CD8-positive, alpha-beta memory T cell (primary cell): ENCODE measurements at regions of chr1 and their contacts with region 1.

Region 1: GRCh38 chr1:201792534-201793305 is 36.2 kb upstream of the IPO9 start:
- DNase-seq: peak; percentile 6 to 62 (median 28)
- H3K4me3 ChIP-seq: no peak overlapping the region
- H3K4me3 Mint-ChIP-seq: no peak overlapping the region
- H3K27ac ChIP-seq: no peak overlapping the region
- H3K27ac Mint-ChIP-seq: peak overlapping the region in 1 of 8 donors; percentile 2
- H3K4me1 ChIP-seq: no peaks in the 10 kb centered on the region
- H3K4me1 Mint-ChIP-seq: no peaks in the 10 kb centered on the region
- H3K27me3 ChIP-seq: no peaks in the 10 kb centered on the region
- H3K27me3 Mint-ChIP-seq: peaks cover 0 to 4% of the 10 kb centered on the region in 2 donors

Region 2: DNA sequence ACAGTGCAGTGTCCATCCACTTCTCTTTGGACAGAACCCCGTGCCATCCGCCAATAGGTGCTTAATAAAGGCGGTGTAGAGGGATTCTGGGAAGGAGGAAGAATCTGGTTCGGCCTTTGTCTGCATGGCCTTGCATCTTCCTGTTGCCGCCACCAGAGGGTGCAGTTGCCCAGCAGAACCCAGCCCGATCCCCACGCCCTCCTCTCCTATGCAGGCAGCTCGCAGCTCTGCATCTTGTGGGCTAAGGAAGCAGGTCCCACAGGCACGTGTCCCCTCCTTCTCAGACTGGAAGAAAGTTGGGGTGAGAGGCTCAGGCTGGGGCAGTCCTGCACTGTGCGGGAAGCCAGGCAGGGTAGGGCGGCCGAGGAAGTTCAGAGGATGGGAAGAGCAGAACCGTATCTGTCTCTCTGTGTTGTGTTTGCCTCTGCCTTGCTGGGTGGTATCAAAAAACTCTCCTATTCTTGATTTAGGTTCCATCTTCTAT is 233.0 kb before region 1 on chr1:
- CTCF ChIA-PET with region 1: interaction called, 29 read pairs
- POLR2A ChIA-PET with region 1: no interaction called
- DNase-seq: peak; percentile 27 to 70 (median 40)
- H3K4me3 ChIP-seq: no peak overlapping the region
- H3K4me3 Mint-ChIP-seq: no peak overlapping the region
- H3K27ac ChIP-seq: no peak overlapping the region
- H3K27ac Mint-ChIP-seq: peak overlapping the region in 1 of 8 donors; percentile 47
- H3K4me1 ChIP-seq: no peaks in the 10 kb centered on the region
- H3K4me1 Mint-ChIP-seq: peaks cover 2 to 10% (median 6%) of the 10 kb centered on the region in 3 donors
- H3K27me3 ChIP-seq: no peaks in the 10 kb centered on the region
- H3K27me3 Mint-ChIP-seq: peaks cover 3 to 4% of the 10 kb centered on the region in 2 donors

Region 3: DNA sequence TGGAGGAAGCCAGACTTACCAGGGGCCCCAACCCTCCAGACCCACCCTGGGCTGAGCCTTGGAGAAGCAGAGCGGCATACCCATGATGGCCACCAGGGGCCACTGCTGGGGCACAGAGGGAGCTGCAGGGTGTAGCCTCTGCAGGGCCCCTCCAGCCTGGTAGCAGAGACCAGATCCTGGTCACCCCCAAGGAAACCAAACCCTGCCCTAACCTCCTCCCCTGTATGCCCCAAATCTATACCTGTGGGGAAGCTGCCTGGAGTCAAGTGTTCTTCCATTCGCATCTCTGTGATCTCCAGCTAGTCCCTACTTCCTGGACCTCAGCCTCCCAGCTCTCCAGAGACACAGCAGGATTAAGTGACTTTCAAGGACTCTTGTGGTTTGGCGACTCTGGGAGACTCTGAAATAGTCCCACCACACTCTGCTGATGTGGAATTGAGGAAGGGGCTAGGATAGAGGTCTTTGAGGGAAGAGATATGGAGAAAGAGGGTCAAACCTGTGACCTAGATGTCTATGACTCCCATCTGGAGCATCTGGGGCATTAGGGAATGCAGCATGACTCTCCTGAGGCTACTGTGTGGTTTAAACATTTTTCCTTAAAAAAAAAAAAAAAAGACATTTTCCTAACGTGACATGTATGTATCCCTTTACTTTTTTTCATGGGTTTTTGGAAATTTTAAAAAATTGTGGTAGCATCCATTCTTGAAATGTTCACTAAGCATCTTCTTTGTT is 83.0 kb before region 1 on chr1:
- CTCF ChIA-PET with region 1: interaction called, 90 read pairs
- POLR2A ChIA-PET with region 1: no interaction called
- DNase-seq: peak; percentile 12 to 66 (median 16)
- H3K4me3 ChIP-seq: no peak overlapping the region
- H3K4me3 Mint-ChIP-seq: no peak overlapping the region
- H3K27ac ChIP-seq: no peak overlapping the region
- H3K27ac Mint-ChIP-seq: no peak overlapping the region
- H3K4me1 ChIP-seq: no peaks in the 10 kb centered on the region
- H3K4me1 Mint-ChIP-seq: no peaks in the 10 kb centered on the region
- H3K27me3 ChIP-seq: no peaks in the 10 kb centered on the region
- H3K27me3 Mint-ChIP-seq: peaks cover 10 to 12% of the 10 kb centered on the region in 2 donors